ENCODE measurements at regions of chr1 and their contacts with region 1.

Region 1: DNA sequence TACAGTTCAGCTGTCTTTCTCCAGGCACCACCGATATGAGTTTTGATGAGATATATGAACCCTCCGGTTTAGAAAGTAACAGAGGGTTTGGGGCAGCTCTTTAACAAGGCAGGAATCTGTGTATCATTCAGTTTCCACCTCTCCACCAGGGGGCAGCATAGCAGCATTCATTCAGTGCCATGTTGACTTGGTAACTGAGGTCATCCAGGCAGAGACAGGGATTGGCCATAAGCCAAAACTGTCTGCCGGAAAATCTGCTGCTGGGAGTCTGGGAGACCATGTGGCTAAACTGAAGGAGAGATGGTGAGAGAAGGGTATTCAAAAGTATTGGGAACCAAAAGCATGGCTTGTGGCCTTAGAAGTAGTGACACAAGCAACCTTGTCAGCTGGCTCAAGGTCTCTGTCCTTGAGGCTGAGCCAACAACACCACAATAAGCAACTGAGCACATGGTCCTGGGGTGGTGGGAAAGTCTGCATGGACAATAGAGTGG is 98.5 kb downstream of the LMX1A start:
- DNase-seq: peak; percentile 61 to 90
- H3K4me3 ChIP-seq: no peak overlapping the region
- H3K27ac ChIP-seq: no peak overlapping the region
- H3K4me1 ChIP-seq: peaks cover 0 to 3% (median 1%) of the 10 kb centered on the region in 4 experiments; a peak in 2 of 7 replicates
- H3K27me3 ChIP-seq: peaks cover 0 to 3% (median 1%) of the 10 kb centered on the region in 4 experiments; a peak in 4 of 7 replicates
- CTCF ChIP-seq: peak; percentile 47 to 91 (median 88)
- EP300 ChIP-seq: no peak
- POLR2A ChIP-seq: no peak
- RAD21 ChIP-seq: peak; percentile 92 to 94

Region 2: GRCh38 chr1:165129568-165130164 is 128.3 kb before region 1 on chr1:
- CTCF ChIA-PET with region 1: interaction called, 13 read pairs
- POLR2A ChIA-PET with region 1: no interaction called
- DNase-seq: peak; percentile 53 to 87
- H3K4me3 ChIP-seq: no peak overlapping the region
- H3K27ac ChIP-seq: no peak overlapping the region
- H3K4me1 ChIP-seq: no peaks in the 10 kb centered on the region
- H3K27me3 ChIP-seq: no peaks in the 10 kb centered on the region
- CTCF ChIP-seq: peak; percentile 68 to 92 (median 83)
- EP300 ChIP-seq: no peak
- POLR2A ChIP-seq: no peak
- RAD21 ChIP-seq: peak; percentile 84 to 86

Region 3: DNA sequence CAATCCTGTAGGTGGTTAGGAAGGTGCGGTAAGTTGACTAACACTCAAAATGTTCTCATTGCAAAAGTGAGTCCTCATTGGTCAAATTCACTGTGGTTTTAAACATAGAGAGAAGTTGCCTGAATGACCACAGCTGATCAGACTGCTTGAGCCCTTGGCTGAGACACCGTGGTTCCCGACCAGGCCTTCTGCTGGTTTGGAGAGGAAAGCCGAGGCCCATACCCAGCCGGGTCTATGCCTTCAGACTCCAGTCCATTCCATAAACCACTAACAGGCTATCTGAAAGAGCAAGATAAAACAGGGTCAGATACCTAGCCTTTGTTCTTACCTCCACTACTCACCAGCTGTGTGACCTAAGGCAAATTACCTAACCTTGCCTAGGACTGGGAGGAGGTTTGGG is 35.4 kb before region 1 on chr1:
- CTCF ChIA-PET with region 1: interaction called, 10 read pairs
- POLR2A ChIA-PET with region 1: no interaction called
- DNase-seq: no peak
- H3K4me3 ChIP-seq: no peak overlapping the region
- H3K27ac ChIP-seq: no peak overlapping the region
- H3K4me1 ChIP-seq: peaks cover 0 to 9% (median 6%) of the 10 kb centered on the region in 4 experiments; a peak in 5 of 7 replicates
- H3K27me3 ChIP-seq: no peaks in the 10 kb centered on the region
- CTCF ChIP-seq: no peak
- EP300 ChIP-seq: no peak
- POLR2A ChIP-seq: no peak
- RAD21 ChIP-seq: no peak

Region 4: GRCh38 chr1:165279882-165280281 is 21.9 kb after region 1 on chr1:
- CTCF ChIA-PET with region 1: interaction called, 47 read pairs
- POLR2A ChIA-PET with region 1: no interaction called
- DNase-seq: no peak
- H3K4me3 ChIP-seq: no peak overlapping the region; a peak in 1 of 8 replicates
- H3K27ac ChIP-seq: no peak overlapping the region
- H3K4me1 ChIP-seq: peaks cover 0 to 12% (median 4%) of the 10 kb centered on the region in 4 experiments; a peak in 3 of 7 replicates
- H3K27me3 ChIP-seq: 0 out of 7 replicates have a peak, but pooled peaks cover 0 to 2% (median 0%) of the 10 kb centered on the region in 4 experiments
- CTCF ChIP-seq: no peak
- EP300 ChIP-seq: no peak
- POLR2A ChIP-seq: no peak
- RAD21 ChIP-seq: no peak

Region 5: GRCh38 chr1:165306541-165307434 is 48.8 kb after region 1 on chr1:
- CTCF ChIA-PET with region 1: interaction called, 27 read pairs
- POLR2A ChIA-PET with region 1: no interaction called
- DNase-seq: no peak
- H3K4me3 ChIP-seq: no peak overlapping the region
- H3K27ac ChIP-seq: no peak overlapping the region
- H3K4me1 ChIP-seq: peaks cover 0 to 2% (median 0%) of the 10 kb centered on the region in 4 experiments; a peak in 2 of 7 replicates
- H3K27me3 ChIP-seq: no peaks in the 10 kb centered on the region
- CTCF ChIP-seq: peak in 2 of 3 experiments; percentile 35; a peak in 2 of 4 replicates
- EP300 ChIP-seq: no peak
- POLR2A ChIP-seq: no peak
- RAD21 ChIP-seq: peak; percentile 41 to 49

Region 6: GRCh38 chr1:165355977-165356811 is 98.2 kb after region 1 on chr1 and contains the start of gene LMX1A:
- CTCF ChIA-PET with region 1: interaction called, 15 read pairs
- POLR2A ChIA-PET with region 1: no interaction called
- DNase-seq: peak in 1 of 2 experiments; percentile 71
- H3K4me3 ChIP-seq: peak within 1 kb of the TSS; percentile 55 to 68 (median 59)
- H3K27ac ChIP-seq: no peak within 1 kb of the TSS
- H3K4me1 ChIP-seq: peaks cover 6 to 29% (median 20%) of the 10 kb centered on the region in 4 experiments
- H3K27me3 ChIP-seq: peaks cover 67 to 90% (median 82%) of the 10 kb centered on the region in 4 experiments
- CTCF ChIP-seq: no peak
- EP300 ChIP-seq: no peak
- POLR2A ChIP-seq: no peak
- RAD21 ChIP-seq: no peak
- total RNA-seq, gene LMX1A: not detected in 2 replicates

Measured in H1 (cell line).